Activated CD4-positive, alpha-beta T cell treated with anti-CD3 and anti-CD28 coated beads, Interleukin-2, amount 10 ng/mL, durations not matched to agents 24 days and 14 days (primary cell): ENCODE measurements at regions of chr11 and their contacts with region 1.

Region 1: GRCh38 chr11:12281571-12282478 is 95.5 kb upstream of the PARVA start:
- DNase-seq: peak; percentile 93
- H3K4me3 Mint-ChIP-seq: no peak overlapping the region
- H3K27ac Mint-ChIP-seq: peak overlapping the region; percentile 71
- H3K4me1 Mint-ChIP-seq: peaks cover 18% of the 10 kb centered on the region
- H3K27me3 Mint-ChIP-seq: no peaks in the 10 kb centered on the region

Region 2: DNA sequence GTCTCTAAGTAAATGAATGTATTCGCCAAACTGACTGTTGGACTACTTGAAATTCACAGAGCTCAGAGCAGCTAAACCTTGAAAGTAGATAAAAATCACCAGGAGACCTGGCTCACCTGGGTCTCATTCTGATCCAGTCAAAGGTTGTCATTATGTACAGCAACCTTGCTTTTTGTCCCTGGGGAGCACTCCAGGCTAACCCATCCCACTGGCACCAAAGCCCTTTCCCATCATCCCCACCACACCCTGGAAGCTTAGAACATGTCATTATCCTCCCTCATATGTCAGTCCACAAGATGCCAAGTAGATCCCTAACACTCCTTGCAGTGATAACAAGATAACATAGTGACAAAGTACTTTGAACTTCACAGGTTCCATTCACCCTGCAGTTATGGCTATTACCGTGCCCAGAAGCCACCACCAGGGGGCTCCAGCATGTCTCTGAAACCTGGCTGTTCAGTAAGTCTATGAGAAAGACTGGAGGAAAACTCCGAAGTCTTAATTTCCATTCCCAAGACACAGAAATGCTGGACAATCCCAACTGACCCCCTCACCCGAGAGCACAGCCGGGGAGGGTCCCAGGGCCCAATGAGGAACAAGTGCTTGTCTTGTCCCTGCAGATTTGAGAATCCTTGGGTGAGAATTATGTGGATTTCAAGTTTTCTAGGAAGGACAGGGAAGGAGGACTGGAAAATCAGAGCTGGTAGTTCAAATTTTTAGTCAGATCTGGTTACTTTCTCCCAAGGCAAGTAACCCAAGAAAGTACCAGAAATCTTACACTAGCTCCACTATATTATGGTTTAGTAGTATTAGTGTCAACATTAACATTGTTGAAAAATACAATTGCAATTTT is 483.0 kb before region 1 on chr11:
- intact Hi-C with region 1: loop called (anchors 5 kb)
- DNase-seq: peak; percentile 88
- H3K4me3 Mint-ChIP-seq: no peak overlapping the region
- H3K27ac Mint-ChIP-seq: no peak overlapping the region
- H3K4me1 Mint-ChIP-seq: no peaks in the 10 kb centered on the region
- H3K27me3 Mint-ChIP-seq: peaks cover 29% of the 10 kb centered on the region

Region 3: GRCh38 chr11:11931461-11932055 is 350.3 kb before region 1 on chr11:
- intact Hi-C with region 1: loop called (anchors 2 kb)
- DNase-seq: peak; percentile 68
- H3K4me3 Mint-ChIP-seq: no peak overlapping the region
- H3K27ac Mint-ChIP-seq: no peak overlapping the region
- H3K4me1 Mint-ChIP-seq: peaks cover 2% of the 10 kb centered on the region
- H3K27me3 Mint-ChIP-seq: no peaks in the 10 kb centered on the region

Region 4: GRCh38 chr11:11966826-11967668 is 314.8 kb before region 1 on chr11:
- intact Hi-C with region 1: loop called (anchors 10 kb)
- DNase-seq: peak; percentile 92
- H3K4me3 Mint-ChIP-seq: no peak overlapping the region
- H3K27ac Mint-ChIP-seq: no peak overlapping the region
- H3K4me1 Mint-ChIP-seq: peaks cover 5% of the 10 kb centered on the region
- H3K27me3 Mint-ChIP-seq: peaks cover 6% of the 10 kb centered on the region

Region 5: GRCh38 chr11:12043959-12044819 is 237.6 kb before region 1 on chr11:
- intact Hi-C with region 1: loop called (anchors 1 kb)
- DNase-seq: peak; percentile 90
- H3K4me3 Mint-ChIP-seq: no peak overlapping the region
- H3K27ac Mint-ChIP-seq: peak overlapping the region; percentile 2
- H3K4me1 Mint-ChIP-seq: peaks cover 19% of the 10 kb centered on the region
- H3K27me3 Mint-ChIP-seq: peaks cover 16% of the 10 kb centered on the region

Region 6: DNA sequence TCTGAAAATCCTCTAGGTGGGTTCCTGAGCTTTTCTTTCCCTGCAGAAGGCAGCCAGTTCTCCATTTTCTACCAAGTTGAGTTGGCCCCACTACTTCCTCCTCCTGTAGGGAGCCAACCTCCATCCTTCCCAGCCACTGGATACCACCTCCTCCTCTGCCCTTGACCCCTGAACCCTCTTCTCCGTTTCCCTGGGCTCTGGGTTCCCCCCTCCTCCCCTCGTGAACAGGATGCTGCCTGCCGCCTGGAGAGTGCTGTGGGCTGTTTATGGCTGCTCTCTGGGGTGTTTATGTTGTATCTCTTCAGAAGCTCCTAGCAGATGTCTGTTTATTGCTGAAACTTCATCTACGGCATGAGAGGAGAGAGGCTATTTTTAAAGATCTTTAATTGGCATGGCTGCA is 162.9 kb before region 1 on chr11:
- intact Hi-C with region 1: loop called (anchors 5 kb)
- DNase-seq: no peak
- H3K4me3 Mint-ChIP-seq: no peak overlapping the region
- H3K27ac Mint-ChIP-seq: peak overlapping the region; percentile 94
- H3K4me1 Mint-ChIP-seq: peaks cover 73% of the 10 kb centered on the region
- H3K27me3 Mint-ChIP-seq: no peaks in the 10 kb centered on the region